Activated naive CD4-positive, alpha-beta T cell treated with anti-CD3 and anti-CD28 coated beads for 36 hours (primary cell): ENCODE measurements at regions of chrX and their contacts with region 1.

Region 1: DNA sequence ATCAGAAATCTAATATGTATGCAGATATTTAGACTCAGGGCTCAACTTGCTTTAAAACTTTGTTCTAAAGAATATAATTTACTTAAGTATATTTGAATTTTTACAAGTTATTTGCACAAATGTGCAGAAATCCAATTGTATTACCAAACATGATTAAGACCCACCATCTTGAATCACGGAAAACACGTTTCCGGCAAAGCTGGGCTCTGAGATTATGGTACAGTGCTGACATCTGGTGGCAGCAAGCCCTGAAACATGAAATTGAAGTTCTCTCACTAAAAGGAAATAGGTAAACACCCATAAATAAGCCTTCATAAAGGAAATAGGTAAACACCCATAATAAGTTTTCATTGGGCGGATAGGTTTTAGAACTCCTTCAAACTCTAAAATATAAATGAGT is 98.3 kb upstream of the MAOA start:
- DNase-seq: peak; percentile 72
- H3K4me3 Mint-ChIP-seq: no peak overlapping the region
- H3K27ac Mint-ChIP-seq: no peak overlapping the region
- H3K4me1 Mint-ChIP-seq: no peaks in the 10 kb centered on the region
- H3K27me3 Mint-ChIP-seq: no peaks in the 10 kb centered on the region

Region 2: GRCh38 chrX:41781502-41781901 is 1776.3 kb before region 1 on chrX:
- CTCF ChIA-PET with region 1: no interaction called
- intact Hi-C with region 1: loop called (anchors 5 kb)
- DNase-seq: no peak
- H3K4me3 Mint-ChIP-seq: no peak overlapping the region
- H3K27ac Mint-ChIP-seq: no peak overlapping the region
- H3K4me1 Mint-ChIP-seq: peaks cover 14% of the 10 kb centered on the region
- H3K27me3 Mint-ChIP-seq: no peaks in the 10 kb centered on the region

Region 3: DNA sequence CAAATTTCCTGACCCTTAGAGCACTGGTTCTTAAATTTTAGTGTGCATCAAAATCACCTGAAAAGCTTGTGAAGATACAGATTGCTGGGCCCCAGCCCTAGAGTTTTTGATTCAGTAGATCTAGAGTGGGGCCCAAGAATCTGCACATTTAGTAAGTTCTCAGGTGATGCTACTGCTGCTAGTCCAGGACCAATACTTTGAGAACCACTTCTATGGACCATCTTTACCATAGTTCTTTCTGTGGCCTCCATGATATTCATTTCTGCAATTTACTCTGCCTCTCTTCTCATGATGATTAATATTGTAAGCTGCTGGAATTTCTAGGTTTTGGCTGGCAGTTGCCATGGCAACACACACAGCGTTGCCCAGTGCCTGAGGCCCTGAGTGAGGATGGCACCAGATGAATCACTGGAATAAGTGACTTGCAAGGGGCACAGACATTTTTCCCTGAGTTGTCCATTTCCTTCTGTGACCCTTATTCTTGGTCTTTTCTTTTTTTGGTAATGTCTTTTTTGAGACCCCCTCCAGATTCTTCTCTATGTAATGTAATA is 863.5 kb before region 1 on chrX:
- CTCF ChIA-PET with region 1: no interaction called
- intact Hi-C with region 1: loop called (anchors 10 kb)
- DNase-seq: peak; percentile 6
- H3K4me3 Mint-ChIP-seq: no peak overlapping the region
- H3K27ac Mint-ChIP-seq: no peak overlapping the region
- H3K4me1 Mint-ChIP-seq: peaks cover 7% of the 10 kb centered on the region
- H3K27me3 Mint-ChIP-seq: no peaks in the 10 kb centered on the region

Region 4: GRCh38 chrX:43573441-43574015 is 15.7 kb after region 1 on chrX:
- CTCF ChIA-PET with region 1: no interaction called
- intact Hi-C with region 1: no loop called
- DNase-seq: no peak
- H3K4me3 Mint-ChIP-seq: no peak overlapping the region
- H3K27ac Mint-ChIP-seq: no peak overlapping the region
- H3K4me1 Mint-ChIP-seq: no peaks in the 10 kb centered on the region
- H3K27me3 Mint-ChIP-seq: peaks cover 4% of the 10 kb centered on the region

Region 5: DNA sequence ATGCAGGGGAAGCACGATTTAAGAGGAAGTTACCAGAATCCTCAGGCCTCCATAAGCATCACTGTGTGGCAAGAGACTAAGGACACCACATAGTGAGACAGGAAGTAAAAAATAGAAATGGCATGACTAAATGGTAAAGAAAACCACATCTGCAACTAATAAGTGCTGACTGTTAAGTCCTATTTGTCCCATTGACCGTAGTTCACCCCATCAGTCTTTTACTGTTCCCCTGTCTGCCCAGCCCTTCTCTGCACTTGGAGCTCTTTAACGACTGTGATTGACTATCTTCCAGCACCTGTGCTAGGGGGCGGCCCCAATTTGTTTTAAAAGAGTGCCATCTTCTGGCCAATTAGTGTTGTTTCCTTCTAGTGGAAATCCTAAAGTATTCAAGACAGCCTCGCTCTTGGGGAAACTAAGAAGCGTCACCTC is 192.5 kb after region 1 on chrX:
- CTCF ChIA-PET with region 1: interaction called, 7 read pairs
- intact Hi-C with region 1: loop called (anchors 1 kb)
- DNase-seq: peak; percentile 46
- H3K4me3 Mint-ChIP-seq: no peak overlapping the region
- H3K27ac Mint-ChIP-seq: no peak overlapping the region
- H3K4me1 Mint-ChIP-seq: no peaks in the 10 kb centered on the region
- H3K27me3 Mint-ChIP-seq: no peaks in the 10 kb centered on the region